CD14-positive monocyte (primary cell): ENCODE measurements at regions of chr20 and their contacts with region 1.

Region 1: GRCh38 chr20:4014031-4014474 is 1.3 kb downstream of the RNF24 start:
- DNase-seq: peak; percentile 42 to 72 (median 64)
- H3K4me3 ChIP-seq: peak overlapping the region; percentile 77 to 97 (median 85)
- H3K4me3 Mint-ChIP-seq: peak overlapping the region; percentile 94 to 97
- H3K27ac ChIP-seq: peak overlapping the region; percentile 53 to 97
- H3K27ac Mint-ChIP-seq: peak overlapping the region; percentile 86 to 98 (median 95)
- H3K4me1 ChIP-seq: peaks cover 67 to 84% of the 10 kb centered on the region in 2 donors
- H3K4me1 Mint-ChIP-seq: peaks cover 64% of the 10 kb centered on the region
- H3K27me3 ChIP-seq: no peaks in the 10 kb centered on the region
- H3K27me3 Mint-ChIP-seq: peaks cover 0 to 4% (median 2%) of the 10 kb centered on the region in 3 donors
- CTCF ChIP-seq: peak; percentile 46

Region 2: GRCh38 chr20:4076671-4077070 is 62.6 kb after region 1 on chr20:
- intact Hi-C with region 1: loop called in 1 of 2 experiments (anchors 5 kb)
- DNase-seq: no peak
- H3K4me3 ChIP-seq: no peak overlapping the region
- H3K4me3 Mint-ChIP-seq: no peak overlapping the region
- H3K27ac ChIP-seq: no peak overlapping the region
- H3K27ac Mint-ChIP-seq: peak overlapping the region in 3 of 7 donors; percentile 54 to 62 (median 60)
- H3K4me1 ChIP-seq: peaks cover 35 to 48% of the 10 kb centered on the region in 2 donors
- H3K4me1 Mint-ChIP-seq: peaks cover 49% of the 10 kb centered on the region
- H3K27me3 ChIP-seq: no peaks in the 10 kb centered on the region
- H3K27me3 Mint-ChIP-seq: peaks cover 0 to 1% (median 0%) of the 10 kb centered on the region in 3 donors
- CTCF ChIP-seq: no peak

Region 3: GRCh38 chr20:4082406-4083097 is 68.5 kb after region 1 on chr20:
- intact Hi-C with region 1: loop called (anchors 2 to 5 kb)
- DNase-seq: peak; percentile 86 to 96 (median 93)
- H3K4me3 ChIP-seq: peak overlapping the region; percentile 6 to 50 (median 8)
- H3K4me3 Mint-ChIP-seq: peak overlapping the region; percentile 33 to 52
- H3K27ac ChIP-seq: peak overlapping the region; percentile 98 to 99
- H3K27ac Mint-ChIP-seq: peak overlapping the region; percentile 93 to 99 (median 96)
- H3K4me1 ChIP-seq: peaks cover 58 to 60% of the 10 kb centered on the region in 2 donors
- H3K4me1 Mint-ChIP-seq: peaks cover 57% of the 10 kb centered on the region
- H3K27me3 ChIP-seq: no peaks in the 10 kb centered on the region
- H3K27me3 Mint-ChIP-seq: peaks cover 0 to 2% (median 0%) of the 10 kb centered on the region in 3 donors
- CTCF ChIP-seq: no peak

Region 4: GRCh38 chr20:4091490-4092479 is 77.7 kb after region 1 on chr20:
- intact Hi-C with region 1: loop called in 1 of 2 experiments (anchors 5 kb)
- DNase-seq: peak in 2 of 3 donors; percentile 57 to 65
- H3K4me3 ChIP-seq: no peak overlapping the region
- H3K4me3 Mint-ChIP-seq: no peak overlapping the region
- H3K27ac ChIP-seq: peak overlapping the region in 1 of 2 donors; percentile 83
- H3K27ac Mint-ChIP-seq: peak overlapping the region; percentile 86 to 98 (median 95)
- H3K4me1 ChIP-seq: peaks cover 36 to 37% of the 10 kb centered on the region in 2 donors
- H3K4me1 Mint-ChIP-seq: peaks cover 37% of the 10 kb centered on the region
- H3K27me3 ChIP-seq: no peaks in the 10 kb centered on the region
- H3K27me3 Mint-ChIP-seq: peaks cover 0 to 3% (median 2%) of the 10 kb centered on the region in 3 donors
- CTCF ChIP-seq: peak; percentile 80

Region 5: DNA sequence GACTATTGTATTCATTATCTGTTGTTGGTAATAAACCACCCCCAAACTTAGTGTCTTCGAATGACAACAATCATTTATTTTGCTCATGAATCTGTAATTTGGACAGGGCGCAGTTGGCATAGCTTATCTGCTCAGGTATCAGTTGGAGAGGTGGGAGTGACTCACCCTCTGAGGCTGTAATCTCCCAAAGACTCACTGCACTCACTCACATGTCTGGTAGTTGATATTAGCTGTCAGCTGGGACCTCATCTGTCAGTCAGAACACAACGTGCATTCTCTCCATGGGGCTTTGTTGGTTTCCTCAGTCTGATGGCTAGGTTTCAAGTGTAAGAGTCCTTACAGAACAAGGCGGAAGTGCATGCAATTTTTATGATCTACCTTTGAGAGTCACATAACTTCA is 488.7 kb after region 1 on chr20:
- intact Hi-C with region 1: no loop called
- DNase-seq: no peak
- H3K4me3 ChIP-seq: no peak overlapping the region
- H3K4me3 Mint-ChIP-seq: no peak overlapping the region
- H3K27ac ChIP-seq: no peak overlapping the region
- H3K27ac Mint-ChIP-seq: no peak overlapping the region
- H3K4me1 ChIP-seq: no peaks in the 10 kb centered on the region
- H3K4me1 Mint-ChIP-seq: no peaks in the 10 kb centered on the region
- H3K27me3 ChIP-seq: no peaks in the 10 kb centered on the region
- H3K27me3 Mint-ChIP-seq: peaks cover 2 to 7% (median 3%) of the 10 kb centered on the region in 3 donors
- CTCF ChIP-seq: no peak